ENCODE measurements at regions of chr5 and their contacts with region 1.

Region 1: DNA sequence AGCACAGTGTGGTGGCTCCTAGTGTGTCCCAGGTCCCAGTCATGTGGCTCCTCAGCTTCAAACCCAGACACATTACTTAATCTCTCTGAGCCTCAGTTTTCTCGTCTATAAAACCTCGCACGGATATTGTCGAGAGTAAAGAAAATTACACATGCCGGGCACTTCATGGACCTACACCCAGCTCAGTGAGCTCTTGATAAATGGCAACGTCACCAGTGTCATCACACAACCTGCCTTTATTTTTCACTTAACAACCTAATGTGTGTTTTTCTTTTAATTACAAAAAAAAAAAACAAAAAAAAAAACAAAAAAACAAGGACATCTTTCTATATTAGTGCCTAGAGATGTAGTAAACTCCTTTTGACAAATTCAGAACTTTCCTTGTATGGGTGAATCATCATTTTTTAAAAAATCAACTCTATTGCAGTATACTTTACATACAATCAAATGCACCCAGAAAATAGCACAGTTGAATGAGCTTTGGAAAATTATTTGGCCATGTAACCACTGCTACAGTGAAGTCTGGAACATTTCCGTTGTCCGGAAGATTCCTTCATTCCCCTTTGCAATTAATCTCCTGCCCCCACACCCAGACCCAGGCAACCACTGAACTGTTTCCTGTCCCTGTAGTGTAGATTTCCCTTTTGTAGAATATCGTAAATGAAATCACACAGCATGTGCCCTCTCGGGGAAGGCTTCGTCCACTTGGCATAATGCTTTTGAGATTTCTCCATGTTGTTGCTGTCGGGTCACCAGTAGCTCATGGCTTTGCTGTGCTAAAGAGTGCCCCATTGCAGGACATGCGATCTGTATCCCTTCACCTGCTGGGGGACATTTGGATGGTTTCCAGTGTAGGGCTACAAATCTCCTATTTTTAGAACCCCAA is 100.4 kb upstream of the LARP1 start:
- DNase-seq: peak in 3 of 5 donors; percentile 61 to 81 (median 72)
- H3K4me3 ChIP-seq: peak overlapping the region in 1 of 3 donors; percentile 16
- H3K27ac ChIP-seq: peak overlapping the region in 1 of 2 donors; percentile 23
- H3K4me1 ChIP-seq: peaks cover 0 to 3% (median 0%) of the 10 kb centered on the region in 3 donors
- H3K27me3 ChIP-seq: no peaks in the 10 kb centered on the region
- CTCF ChIP-seq: no peak

Region 2: GRCh38 chr5:154811653-154812365 is 157.1 kb after region 1 on chr5:
- intact Hi-C with region 1: loop called (anchors 5 kb)
- DNase-seq: peak in 3 of 5 donors; percentile 62 to 78 (median 65)
- H3K4me3 ChIP-seq: no peak overlapping the region
- H3K27ac ChIP-seq: no peak overlapping the region
- H3K4me1 ChIP-seq: peaks cover 0 to 11% (median 8%) of the 10 kb centered on the region in 3 donors
- H3K27me3 ChIP-seq: no peaks in the 10 kb centered on the region
- CTCF ChIP-seq: peak; percentile 76